CD8-positive, alpha-beta T cell (primary cell): ENCODE measurements at regions of chr13 and their contacts with region 1.

Region 1: DNA sequence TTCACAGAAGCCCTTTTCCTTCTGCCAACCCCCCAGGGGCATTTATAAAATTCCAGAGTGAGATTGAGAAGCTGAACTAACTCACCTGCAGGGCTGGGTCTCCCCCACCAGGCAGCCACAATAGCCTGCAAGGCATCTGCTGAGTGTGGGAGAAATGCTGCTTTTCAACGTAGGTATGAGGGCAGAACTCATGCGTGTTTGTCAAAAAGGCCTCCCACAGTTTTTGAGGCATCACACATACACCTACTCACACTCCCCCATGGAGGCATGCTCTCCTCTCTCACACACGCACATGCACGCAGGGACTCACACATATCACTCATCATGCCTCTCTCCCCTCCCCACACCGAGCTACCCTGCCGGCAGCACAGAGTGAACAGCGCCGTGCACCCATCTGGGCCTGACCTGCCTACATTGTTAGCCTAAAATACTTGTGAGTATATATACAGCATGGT is 390.5 kb downstream of the FGF9 start:
- DNase-seq: peak; percentile 20 to 84 (median 54)
- ATAC-seq: peak; percentile 78
- H3K4me3 ChIP-seq: no peak overlapping the region
- H3K4me3 Mint-ChIP-seq: peak overlapping the region; percentile 19
- H3K27ac ChIP-seq: peak overlapping the region; percentile 77 to 90
- H3K27ac Mint-ChIP-seq: peak overlapping the region; percentile 94
- H3K4me1 ChIP-seq: peaks cover 66% of the 10 kb centered on the region
- H3K4me1 Mint-ChIP-seq: peaks cover 80% of the 10 kb centered on the region
- H3K27me3 ChIP-seq: no peaks in the 10 kb centered on the region
- H3K27me3 Mint-ChIP-seq: no peaks in the 10 kb centered on the region
- CTCF ChIP-seq: peak; percentile 20

Region 2: GRCh38 chr13:21849323-21849722 is 212.1 kb before region 1 on chr13:
- CTCF ChIA-PET with region 1: no interaction called
- POLR2A ChIA-PET with region 1: no interaction called
- intact Hi-C with region 1: loop called in 1 of 2 experiments (anchors 5 kb)
- DNase-seq: peak in 3 of 9 experiments; percentile 20 to 63 (median 53)
- ATAC-seq: peak; percentile 67
- H3K4me3 ChIP-seq: no peak overlapping the region
- H3K4me3 Mint-ChIP-seq: no peak overlapping the region
- H3K27ac ChIP-seq: no peak overlapping the region
- H3K27ac Mint-ChIP-seq: no peak overlapping the region
- H3K4me1 ChIP-seq: no peaks in the 10 kb centered on the region
- H3K4me1 Mint-ChIP-seq: peaks cover 3% of the 10 kb centered on the region
- H3K27me3 ChIP-seq: no peaks in the 10 kb centered on the region
- H3K27me3 Mint-ChIP-seq: peaks cover 4% of the 10 kb centered on the region
- CTCF ChIP-seq: peak; percentile 53

Region 3: GRCh38 chr13:22076658-22077057 is 15.3 kb after region 1 on chr13:
- CTCF ChIA-PET with region 1: interaction called, 6 read pairs
- POLR2A ChIA-PET with region 1: no interaction called
- intact Hi-C with region 1: loop called in 1 of 2 experiments (anchors 2 kb)
- DNase-seq: peak in 4 of 9 experiments; percentile 13 to 61 (median 38)
- ATAC-seq: peak; percentile 87
- H3K4me3 ChIP-seq: no peak overlapping the region
- H3K4me3 Mint-ChIP-seq: no peak overlapping the region
- H3K27ac ChIP-seq: no peak overlapping the region
- H3K27ac Mint-ChIP-seq: peak overlapping the region; percentile 78
- H3K4me1 ChIP-seq: peaks cover 24% of the 10 kb centered on the region
- H3K4me1 Mint-ChIP-seq: peaks cover 30% of the 10 kb centered on the region
- H3K27me3 ChIP-seq: no peaks in the 10 kb centered on the region
- H3K27me3 Mint-ChIP-seq: peaks cover 2% of the 10 kb centered on the region
- CTCF ChIP-seq: no peak

Region 4: DNA sequence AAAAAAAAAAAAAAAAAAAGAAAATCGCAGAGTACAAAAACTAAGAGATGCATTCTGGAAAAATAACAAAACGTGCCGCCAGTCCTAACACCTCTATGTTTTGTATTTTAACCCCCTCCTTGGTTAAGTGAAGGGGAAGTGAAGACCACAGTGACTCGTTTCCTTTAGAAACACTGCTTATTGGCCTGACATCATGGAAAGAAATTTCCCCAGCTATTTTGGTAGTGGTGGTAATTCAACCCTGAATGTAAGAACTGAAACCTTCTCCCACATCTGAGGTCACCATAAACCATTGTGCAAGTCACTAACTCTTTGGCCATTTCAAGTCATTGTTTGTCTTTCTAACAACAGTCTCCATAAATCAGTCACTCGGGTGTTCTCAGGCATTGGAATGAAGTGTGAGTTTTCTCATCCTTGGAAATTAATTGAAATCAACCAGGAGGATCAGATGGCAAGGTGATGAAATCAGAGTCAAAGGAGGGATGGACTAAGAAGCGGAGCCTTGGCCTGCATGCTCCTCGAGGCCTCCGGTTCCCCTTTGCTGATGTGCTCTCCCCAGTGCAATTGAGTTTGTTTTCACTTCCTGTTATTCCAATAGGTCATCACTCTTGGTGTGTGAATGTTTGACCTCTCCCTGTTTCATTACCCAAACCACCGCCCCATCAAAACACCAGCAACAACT is 53.4 kb after region 1 on chr13:
- CTCF ChIA-PET with region 1: no interaction called
- POLR2A ChIA-PET with region 1: no interaction called
- intact Hi-C with region 1: loop called (anchors 1 to 2 kb)
- DNase-seq: peak in 6 of 9 experiments; percentile 16 to 93 (median 46)
- ATAC-seq: peak; percentile 88
- H3K4me3 ChIP-seq: no peak overlapping the region
- H3K4me3 Mint-ChIP-seq: peak overlapping the region; percentile 4
- H3K27ac ChIP-seq: peak overlapping the region in 1 of 2 experiments; percentile 54
- H3K27ac Mint-ChIP-seq: peak overlapping the region; percentile 88
- H3K4me1 ChIP-seq: peaks cover 20% of the 10 kb centered on the region
- H3K4me1 Mint-ChIP-seq: peaks cover 36% of the 10 kb centered on the region
- H3K27me3 ChIP-seq: no peaks in the 10 kb centered on the region
- H3K27me3 Mint-ChIP-seq: no peaks in the 10 kb centered on the region
- CTCF ChIP-seq: no peak

Region 5: GRCh38 chr13:22161871-22162270 is 100.5 kb after region 1 on chr13:
- CTCF ChIA-PET with region 1: no interaction called
- POLR2A ChIA-PET with region 1: no interaction called
- intact Hi-C with region 1: loop called in 1 of 2 experiments (anchors 5 kb)
- DNase-seq: peak in 1 of 9 experiments; percentile 37
- ATAC-seq: no peak
- H3K4me3 ChIP-seq: peak overlapping the region in 1 of 2 experiments; percentile 1
- H3K4me3 Mint-ChIP-seq: peak overlapping the region; percentile 74
- H3K27ac ChIP-seq: no peak overlapping the region
- H3K27ac Mint-ChIP-seq: peak overlapping the region; percentile 32
- H3K4me1 ChIP-seq: peaks cover 16% of the 10 kb centered on the region
- H3K4me1 Mint-ChIP-seq: peaks cover 30% of the 10 kb centered on the region
- H3K27me3 ChIP-seq: no peaks in the 10 kb centered on the region
- H3K27me3 Mint-ChIP-seq: no peaks in the 10 kb centered on the region
- CTCF ChIP-seq: no peak

Region 6: DNA sequence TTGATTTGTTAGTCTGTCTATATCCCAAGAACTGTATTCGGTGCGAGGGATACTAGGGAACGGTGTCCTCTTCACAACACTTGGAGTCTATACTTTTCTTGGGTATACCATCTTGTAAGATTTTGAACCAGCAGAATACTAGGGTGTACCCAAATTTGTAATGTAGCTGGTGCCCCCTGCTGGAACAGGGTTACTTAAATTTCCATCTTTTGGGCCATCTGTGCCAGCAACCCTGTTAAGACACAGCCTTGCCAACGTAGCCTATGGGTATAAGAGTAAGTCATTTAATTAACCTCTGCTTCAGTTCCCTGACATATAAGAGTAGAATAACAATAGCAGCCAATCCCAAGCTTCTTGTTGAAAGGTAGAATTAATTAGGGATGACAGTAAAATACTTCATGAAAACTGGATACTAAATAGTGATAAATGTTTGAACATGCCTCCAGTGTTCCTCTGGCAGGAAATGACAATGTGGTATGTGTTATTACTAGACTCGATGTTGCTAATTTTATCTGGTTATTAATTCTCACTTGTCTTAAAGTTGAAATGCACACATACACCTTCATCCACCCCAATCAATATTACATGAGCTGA is 217.1 kb after region 1 on chr13:
- CTCF ChIA-PET with region 1: interaction called, 3 read pairs
- POLR2A ChIA-PET with region 1: no interaction called
- intact Hi-C with region 1: loop called in 1 of 2 experiments (anchors 1 kb)
- DNase-seq: peak; percentile 53 to 83 (median 71)
- ATAC-seq: peak; percentile 56
- H3K4me3 ChIP-seq: no peak overlapping the region
- H3K4me3 Mint-ChIP-seq: no peak overlapping the region
- H3K27ac ChIP-seq: no peak overlapping the region
- H3K27ac Mint-ChIP-seq: no peak overlapping the region
- H3K4me1 ChIP-seq: no peaks in the 10 kb centered on the region
- H3K4me1 Mint-ChIP-seq: peaks cover 11% of the 10 kb centered on the region
- H3K27me3 ChIP-seq: no peaks in the 10 kb centered on the region
- H3K27me3 Mint-ChIP-seq: peaks cover 2% of the 10 kb centered on the region
- CTCF ChIP-seq: peak; percentile 44